K562 (cell line): ENCODE measurements at regions of chr13 and their contacts with region 1.

Region 1: DNA sequence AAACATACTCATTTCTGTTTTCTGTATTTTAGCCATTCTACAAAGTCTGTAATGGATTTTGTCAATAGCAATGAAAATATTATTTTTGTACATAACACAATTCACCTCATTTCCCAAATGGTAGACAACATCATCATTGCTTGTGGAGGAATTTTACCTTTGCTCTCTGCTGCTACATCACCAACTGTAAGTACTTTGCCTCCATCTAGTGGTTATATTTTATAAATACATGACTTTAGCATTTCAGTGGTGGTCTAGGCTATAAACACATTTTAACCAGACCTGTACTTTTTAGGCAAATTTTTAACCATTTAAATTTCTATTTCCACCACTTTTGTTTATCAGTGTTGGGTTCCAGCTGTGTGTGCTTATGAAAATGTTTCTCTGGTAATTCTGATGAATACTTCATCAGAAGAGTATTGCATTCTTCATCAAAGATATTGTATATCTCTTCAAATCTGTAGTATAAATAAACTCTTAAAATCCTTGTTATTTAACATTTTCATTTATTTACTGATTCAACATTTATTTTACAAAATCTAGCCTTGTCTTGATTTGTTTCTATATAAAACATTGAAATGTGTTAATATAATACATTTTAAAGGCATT is 222.4 kb downstream of the NBEA start:
- DNase-seq: peak; percentile 6 to 17 (median 14)
- ATAC-seq: peak; percentile 61; the same call in 1 of the 3 replicates
- H3K4me3 ChIP-seq: no peak overlapping the region
- H3K27ac ChIP-seq: no peak overlapping the region
- H3K4me1 ChIP-seq: no peaks in the 10 kb centered on the region
- H3K27me3 ChIP-seq: no peaks in the 10 kb centered on the region
- CTCF ChIP-seq: peak; percentile 14 to 58 (median 27); a peak in 3 of 6 replicates
- EP300 ChIP-seq: no peak
- POLR2A ChIP-seq: no peak
- RAD21 ChIP-seq: peak; percentile 70 to 76

Region 2: DNA sequence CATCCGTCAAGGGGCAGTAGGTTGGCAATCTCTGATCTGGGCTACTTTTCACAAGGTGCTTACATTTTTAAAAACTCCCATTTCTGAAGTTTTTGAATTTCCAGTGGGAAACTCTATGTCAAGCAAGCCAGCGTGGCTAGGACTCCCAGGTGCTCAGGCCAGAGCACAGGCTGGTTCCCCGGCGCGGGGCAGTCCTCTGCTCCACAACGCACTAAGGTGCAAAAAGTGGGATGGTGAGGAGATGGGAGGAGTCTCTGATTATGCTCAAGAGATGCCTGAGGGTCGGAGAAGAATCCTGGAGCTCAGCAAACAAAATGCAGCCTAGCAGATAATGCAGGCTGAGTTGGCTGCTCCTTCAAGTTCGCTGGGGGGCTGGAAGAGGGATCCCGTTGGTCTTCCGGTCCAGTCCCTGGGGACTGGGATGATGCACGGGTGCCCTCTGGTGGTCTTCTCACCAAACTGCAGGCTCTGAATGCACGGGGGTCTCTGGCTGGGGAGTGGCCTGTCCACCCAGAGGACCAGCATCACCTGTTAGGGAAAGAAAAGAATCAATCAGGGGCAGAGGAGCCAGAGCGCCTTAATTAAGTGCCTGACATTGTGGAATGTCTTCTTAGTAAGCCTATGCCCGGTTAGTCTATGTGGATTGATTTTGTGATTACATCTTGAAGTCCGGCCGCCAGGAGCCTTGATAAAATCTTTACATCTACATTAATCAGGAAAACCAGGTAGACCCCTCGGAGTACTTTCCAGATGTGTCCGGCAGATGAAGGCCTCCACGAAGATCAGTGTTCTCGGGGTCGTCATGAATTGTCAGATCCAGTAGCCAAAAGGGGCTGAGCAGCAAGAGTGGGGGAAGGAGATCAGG is 556.5 kb after region 1 on chr13:
- CTCF ChIA-PET with region 1: no interaction called
- POLR2A ChIA-PET with region 1: no interaction called
- in situ Hi-C with region 1: no loop called
- intact Hi-C with region 1: loop called (anchors 5 kb)
- DNase-seq: peak; percentile 48 to 76 (median 68)
- ATAC-seq: peak; percentile 85
- H3K4me3 ChIP-seq: no peak overlapping the region
- H3K27ac ChIP-seq: no peak overlapping the region
- H3K4me1 ChIP-seq: no peaks in the 10 kb centered on the region
- H3K27me3 ChIP-seq: no peaks in the 10 kb centered on the region
- CTCF ChIP-seq: peak; percentile 57 to 82 (median 63)
- EP300 ChIP-seq: no peak
- POLR2A ChIP-seq: no peak
- RAD21 ChIP-seq: peak; percentile 37 to 63; a peak in 3 of 4 replicates

Region 3: GRCh38 chr13:36059321-36059720 is 894.9 kb after region 1 on chr13:
- CTCF ChIA-PET with region 1: no interaction called
- POLR2A ChIA-PET with region 1: no interaction called
- in situ Hi-C with region 1: no loop called
- intact Hi-C with region 1: no loop called
- DNase-seq: no peak
- ATAC-seq: no peak
- H3K4me3 ChIP-seq: no peak overlapping the region
- H3K27ac ChIP-seq: no peak overlapping the region
- H3K4me1 ChIP-seq: no peaks in the 10 kb centered on the region
- H3K27me3 ChIP-seq: no peaks in the 10 kb centered on the region
- CTCF ChIP-seq: no peak
- EP300 ChIP-seq: no peak
- POLR2A ChIP-seq: no peak
- RAD21 ChIP-seq: no peak